Activated naive CD4-positive, alpha-beta T cell treated with anti-CD3 and anti-CD28 coated beads for 36 hours (primary cell): ENCODE measurements at regions of chr11 and their contacts with region 1.

Region 1: DNA sequence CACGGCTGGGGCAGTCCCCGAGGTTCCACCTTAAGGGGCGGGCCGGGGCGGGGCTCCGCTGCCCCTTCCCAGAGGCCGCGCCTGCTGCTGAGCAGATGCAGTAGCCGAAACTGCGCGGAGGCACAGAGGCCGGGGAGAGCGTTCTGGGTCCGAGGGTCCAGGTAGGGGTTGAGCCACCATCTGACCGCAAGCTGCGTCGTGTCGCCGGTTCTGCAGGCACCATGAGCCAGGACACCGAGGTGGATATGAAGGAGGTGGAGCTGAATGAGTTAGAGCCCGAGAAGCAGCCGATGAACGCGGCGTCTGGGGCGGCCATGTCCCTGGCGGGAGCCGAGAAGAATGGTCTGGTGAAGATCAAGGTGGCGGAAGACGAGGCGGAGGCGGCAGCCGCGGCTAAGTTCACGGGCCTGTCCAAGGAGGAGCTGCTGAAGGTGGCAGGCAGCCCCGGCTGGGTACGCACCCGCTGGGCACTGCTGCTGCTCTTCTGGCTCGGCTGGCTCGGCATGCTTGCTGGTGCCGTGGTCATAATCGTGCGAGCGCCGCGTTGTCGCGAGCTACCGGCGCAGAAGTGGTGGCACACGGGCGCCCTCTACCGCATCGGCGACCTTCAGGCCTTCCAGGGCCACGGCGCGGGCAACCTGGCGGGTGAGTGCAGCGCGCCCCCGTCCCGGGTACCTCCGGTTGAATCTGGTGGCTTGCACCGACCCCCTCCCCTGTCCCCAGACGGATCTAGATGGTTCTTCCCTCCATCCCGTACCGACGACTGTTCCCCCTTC is at the start of gene SLC3A2:
- DNase-seq: peak; percentile 82
- H3K4me3 Mint-ChIP-seq: peak within 1 kb of the TSS; percentile 100
- H3K27ac Mint-ChIP-seq: peak within 1 kb of the TSS; percentile 100
- H3K4me1 Mint-ChIP-seq: peaks cover 49% of the 10 kb centered on the region
- H3K27me3 Mint-ChIP-seq: no peaks in the 10 kb centered on the region
- total RNA-seq, gene SLC3A2: 419 to 472 TPM

Region 2: GRCh38 chr11:62601394-62602140 is 279.4 kb before region 1 on chr11 and contains the start of gene MTA2:
- CTCF ChIA-PET with region 1: no interaction called
- intact Hi-C with region 1: loop called (anchors 2 kb)
- DNase-seq: peak; percentile 99
- H3K4me3 Mint-ChIP-seq: peak within 1 kb of the TSS; percentile 91
- H3K27ac Mint-ChIP-seq: peak within 1 kb of the TSS; percentile 99
- H3K4me1 Mint-ChIP-seq: peaks cover 45% of the 10 kb centered on the region
- H3K27me3 Mint-ChIP-seq: no peaks in the 10 kb centered on the region
- total RNA-seq, gene MTA2: 191 to 197 TPM

Region 3: GRCh38 chr11:62747475-62748160 is 133.4 kb before region 1 on chr11:
- CTCF ChIA-PET with region 1: no interaction called
- intact Hi-C with region 1: no loop called
- DNase-seq: no peak
- H3K4me3 Mint-ChIP-seq: no peak overlapping the region
- H3K27ac Mint-ChIP-seq: no peak overlapping the region
- H3K4me1 Mint-ChIP-seq: peaks cover 26% of the 10 kb centered on the region
- H3K27me3 Mint-ChIP-seq: no peaks in the 10 kb centered on the region

Region 4: GRCh38 chr11:62771144-62772021 is 109.6 kb before region 1 on chr11 and contains the start of gene TAF6L:
- CTCF ChIA-PET with region 1: interaction called, 3 read pairs
- intact Hi-C with region 1: loop called (anchors 1 kb)
- DNase-seq: peak; percentile 95
- H3K4me3 Mint-ChIP-seq: peak within 1 kb of the TSS; percentile 80
- H3K27ac Mint-ChIP-seq: peak within 1 kb of the TSS; percentile 91
- H3K4me1 Mint-ChIP-seq: peaks cover 25% of the 10 kb centered on the region
- H3K27me3 Mint-ChIP-seq: no peaks in the 10 kb centered on the region
- total RNA-seq, gene TAF6L: 8.9 to 10.5 TPM

Region 5: GRCh38 chr11:62805076-62805892 is 75.7 kb before region 1 on chr11 and contains the start of gene NXF1:
- CTCF ChIA-PET with region 1: interaction called, 6 read pairs
- intact Hi-C with region 1: loop called (anchors 1 kb)
- DNase-seq: peak; percentile 93
- H3K4me3 Mint-ChIP-seq: peak within 1 kb of the TSS; percentile 95
- H3K27ac Mint-ChIP-seq: peak within 1 kb of the TSS; percentile 94
- H3K4me1 Mint-ChIP-seq: peaks cover 28% of the 10 kb centered on the region
- H3K27me3 Mint-ChIP-seq: no peaks in the 10 kb centered on the region
- total RNA-seq, gene NXF1: 44.6 to 46.0 TPM

Region 6: DNA sequence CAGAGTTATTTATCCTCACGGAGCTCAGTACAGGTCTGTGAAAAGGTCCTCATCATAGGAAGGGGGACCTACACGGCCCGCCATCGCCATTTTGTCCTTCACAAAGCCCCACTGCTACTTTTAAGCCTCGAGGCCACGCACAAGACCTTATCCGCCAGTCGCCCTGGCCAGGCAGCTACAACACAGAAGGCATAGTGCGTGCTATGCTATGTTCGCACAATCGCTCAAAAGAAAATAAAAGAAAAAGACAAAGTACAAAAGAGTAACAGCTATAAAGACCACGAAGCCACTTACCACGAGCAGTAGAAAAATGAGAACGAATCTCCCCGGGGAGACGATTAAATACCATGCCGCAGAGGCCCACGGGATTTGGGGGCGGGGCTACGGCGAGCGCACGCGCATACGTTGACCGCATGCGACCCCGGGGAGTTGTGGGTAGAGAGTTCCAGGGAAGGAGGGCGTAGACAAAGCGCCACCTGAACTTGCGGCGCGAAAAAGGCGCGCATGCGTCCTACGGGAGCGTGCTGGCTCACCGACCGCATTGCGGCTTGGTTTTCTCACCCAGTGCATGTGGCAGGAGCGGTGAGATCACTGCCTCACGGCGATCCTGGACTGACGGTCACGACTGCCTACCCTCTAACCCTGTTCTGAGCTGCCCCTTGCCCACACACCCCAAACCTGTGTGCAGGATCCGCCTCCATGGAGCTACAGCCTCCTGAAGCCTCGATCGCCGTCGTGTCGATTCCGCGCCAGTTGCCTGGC is 25.2 kb before region 1 on chr11:
- CTCF ChIA-PET with region 1: interaction called, 10 read pairs
- intact Hi-C with region 1: loop called (anchors 1 kb)
- DNase-seq: peak; percentile 98
- H3K4me3 Mint-ChIP-seq: peak overlapping the region; percentile 99
- H3K27ac Mint-ChIP-seq: peak overlapping the region; percentile 96
- H3K4me1 Mint-ChIP-seq: peaks cover 53% of the 10 kb centered on the region
- H3K27me3 Mint-ChIP-seq: no peaks in the 10 kb centered on the region